ENCODE measurements at regions of chr13 and their contacts with region 1.

Region 1: GRCh38 chr13:42405665-42406390 is 133.9 kb downstream of the AKAP11 start:
- DNase-seq: no peak
- H3K4me3 Mint-ChIP-seq: peak overlapping the region; percentile 60
- H3K27ac Mint-ChIP-seq: peak overlapping the region; percentile 96
- H3K4me1 Mint-ChIP-seq: peaks cover 60% of the 10 kb centered on the region
- H3K27me3 Mint-ChIP-seq: no peaks in the 10 kb centered on the region

Region 2: GRCh38 chr13:42333613-42334328 is 72.1 kb before region 1 on chr13:
- intact Hi-C with region 1: loop called (anchors 5 kb)
- DNase-seq: no peak
- H3K4me3 Mint-ChIP-seq: no peak overlapping the region
- H3K27ac Mint-ChIP-seq: peak overlapping the region; percentile 6
- H3K4me1 Mint-ChIP-seq: peaks cover 51% of the 10 kb centered on the region
- H3K27me3 Mint-ChIP-seq: no peaks in the 10 kb centered on the region

Region 3: DNA sequence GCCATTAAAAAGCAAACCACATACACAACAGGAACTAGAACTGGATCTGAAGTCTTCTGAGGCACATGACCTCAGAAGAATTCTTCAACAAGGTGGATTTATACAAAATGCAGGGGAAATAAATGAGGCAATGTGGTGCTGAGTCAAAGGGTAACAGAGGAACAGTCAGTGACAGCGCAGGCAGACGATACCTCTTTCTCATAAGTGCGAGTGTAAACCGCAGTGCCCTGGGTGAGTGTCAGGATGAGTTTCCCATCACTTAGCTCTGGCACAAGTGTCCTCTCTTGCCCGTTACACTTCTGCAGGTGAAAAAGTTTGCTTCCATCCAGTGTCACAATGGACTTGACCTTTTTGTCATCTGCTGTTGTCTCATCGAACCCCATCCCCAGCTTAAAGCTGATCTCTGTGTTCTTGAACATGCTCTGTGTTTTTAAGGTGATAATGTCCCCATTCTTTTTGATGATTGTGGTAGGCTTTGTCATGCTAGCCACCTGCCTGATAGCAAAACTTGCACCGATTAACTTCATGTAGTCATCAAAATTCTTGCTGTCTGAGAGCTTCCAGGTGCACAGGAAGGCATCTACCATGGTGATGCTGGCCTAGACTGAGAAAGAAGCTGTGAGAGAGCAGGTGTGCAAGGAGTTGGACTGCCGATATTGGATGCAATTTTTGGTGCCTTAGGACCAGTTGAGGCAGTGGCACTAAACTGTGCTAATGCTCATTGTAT is 36.6 kb before region 1 on chr13:
- intact Hi-C with region 1: loop called (anchors 1 kb)
- DNase-seq: no peak
- H3K4me3 Mint-ChIP-seq: no peak overlapping the region
- H3K27ac Mint-ChIP-seq: peak overlapping the region; percentile 54
- H3K4me1 Mint-ChIP-seq: peaks cover 66% of the 10 kb centered on the region
- H3K27me3 Mint-ChIP-seq: no peaks in the 10 kb centered on the region

Region 4: GRCh38 chr13:42420304-42420703 is 14.5 kb after region 1 on chr13:
- intact Hi-C with region 1: loop called (anchors 1 kb)
- DNase-seq: no peak
- H3K4me3 Mint-ChIP-seq: peak overlapping the region; percentile 54
- H3K27ac Mint-ChIP-seq: peak overlapping the region; percentile 83
- H3K4me1 Mint-ChIP-seq: peaks cover 43% of the 10 kb centered on the region
- H3K27me3 Mint-ChIP-seq: peaks cover 2% of the 10 kb centered on the region

Region 5: GRCh38 chr13:42574435-42575311 is 168.8 kb after region 1 on chr13:
- intact Hi-C with region 1: loop called (anchors 1 kb)
- DNase-seq: no peak
- H3K4me3 Mint-ChIP-seq: peak overlapping the region; percentile 74
- H3K27ac Mint-ChIP-seq: peak overlapping the region; percentile 64
- H3K4me1 Mint-ChIP-seq: peaks cover 19% of the 10 kb centered on the region
- H3K27me3 Mint-ChIP-seq: peaks cover 59% of the 10 kb centered on the region

Region 6: GRCh38 chr13:42594970-42595571 is 189.2 kb after region 1 on chr13:
- intact Hi-C with region 1: no loop called
- DNase-seq: peak; percentile 12
- H3K4me3 Mint-ChIP-seq: no peak overlapping the region
- H3K27ac Mint-ChIP-seq: no peak overlapping the region
- H3K4me1 Mint-ChIP-seq: peaks cover 2% of the 10 kb centered on the region
- H3K27me3 Mint-ChIP-seq: peaks cover 10% of the 10 kb centered on the region

Measured in activated T-helper 1 cell treated with anti-CD3 and anti-CD28 coated beads, Interleukin-12 subunit alpha, Interleukin-12 subunit beta, Interleukin-2, Interleukin-4 antibody, amounts not matched to agents 30 ng/mL and 10 ng/mL and 1 ng/mL, durations not matched to agents 14 hours and 24 hours and 36 hours (primary cell).